Cardiac septum (tissue), 1 donor: ENCODE measurements at regions of chr10 and their contacts with region 1.

Region 1: DNA sequence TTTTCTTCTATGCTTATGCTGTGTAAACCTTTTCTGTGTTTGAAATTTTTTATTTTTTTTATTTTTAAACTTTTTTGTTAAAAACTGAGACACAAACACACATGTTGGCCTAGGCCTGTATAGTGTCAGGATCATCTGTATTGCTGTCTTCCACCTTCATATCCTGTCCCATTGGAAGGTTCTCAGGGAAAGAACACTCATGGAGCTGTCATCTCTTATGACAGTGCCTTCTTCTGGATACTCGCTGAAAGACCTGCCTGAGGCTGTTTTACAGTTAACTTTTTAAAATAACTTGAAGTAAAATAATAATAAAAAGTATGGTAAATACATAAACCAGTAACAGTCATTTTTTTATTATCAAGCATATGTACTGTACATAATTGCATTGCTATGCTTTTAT is 34.1 kb downstream of the CREM start:
- DNase-seq: no peak

Region 2: GRCh38 chr10:35083242-35083641 is 77.5 kb before region 1 on chr10:
- intact Hi-C with region 1: loop called (anchors 2 kb)
- DNase-seq: no peak

Region 3: DNA sequence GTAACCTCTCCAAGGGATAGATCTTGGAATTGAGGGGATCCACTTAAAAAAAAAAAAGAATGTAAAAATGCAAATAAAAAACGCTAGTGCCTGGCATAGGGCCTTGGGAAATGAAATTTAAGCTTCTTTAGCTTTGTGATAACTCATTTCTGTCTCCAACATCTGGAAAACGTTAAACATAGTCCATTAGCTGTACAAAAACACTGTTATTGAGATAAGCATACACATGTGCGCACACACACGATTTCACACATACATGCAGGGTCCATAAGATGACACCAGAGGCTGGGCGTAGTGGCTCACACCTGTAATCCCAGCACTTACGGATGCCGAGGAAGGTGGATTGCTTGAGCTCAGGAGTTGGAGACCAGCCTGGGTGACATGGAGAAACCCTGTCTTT is 56.9 kb before region 1 on chr10:
- intact Hi-C with region 1: no loop called
- DNase-seq: no peak